ENCODE measurements at regions of chr5 and their contacts with region 1.

Region 1: GRCh38 chr5:40688127-40688761 is 8.5 kb downstream of the PTGER4 start:
- DNase-seq: peak; percentile 71 to 75
- ATAC-seq: peak; percentile 89 to 91
- H3K4me3 ChIP-seq: peak overlapping the region in 2 of 4 donors; percentile 18 to 78
- H3K27ac ChIP-seq: peak overlapping the region; percentile 32 to 87 (median 62)
- H3K4me1 ChIP-seq: peaks cover 14 to 24% of the 10 kb centered on the region in 2 donors
- H3K27me3 ChIP-seq: peaks cover 0 to 11% (median 7%) of the 10 kb centered on the region in 3 donors
- CTCF ChIP-seq: peak; percentile 82 to 90 (median 87)
- POLR2A ChIP-seq: no peak

Region 2: GRCh38 chr5:39578887-39579497 is 1109.3 kb before region 1 on chr5:
- in situ Hi-C with region 1: loop called (anchors 5 to 25 kb)
- intact Hi-C with region 1: loop called (anchors 1 kb)
- DNase-seq: no peak
- ATAC-seq: no peak
- H3K4me3 ChIP-seq: no peak overlapping the region
- H3K27ac ChIP-seq: no peak overlapping the region
- H3K4me1 ChIP-seq: no peaks in the 10 kb centered on the region
- H3K27me3 ChIP-seq: no peaks in the 10 kb centered on the region
- CTCF ChIP-seq: peak; percentile 39 to 69 (median 44)
- POLR2A ChIP-seq: no peak

Region 3: GRCh38 chr5:39714036-39714698 is 974.1 kb before region 1 on chr5:
- in situ Hi-C with region 1: loop called in 3 of 4 experiments (anchors 10 to 25 kb)
- intact Hi-C with region 1: loop called (anchors 1 kb)
- DNase-seq: peak in 1 of 2 donors; percentile 18
- ATAC-seq: peak; percentile 52 to 64
- H3K4me3 ChIP-seq: no peak overlapping the region
- H3K27ac ChIP-seq: peak overlapping the region; percentile 27 to 52 (median 48)
- H3K4me1 ChIP-seq: peaks cover 21 to 28% of the 10 kb centered on the region in 2 donors
- H3K27me3 ChIP-seq: no peaks in the 10 kb centered on the region
- CTCF ChIP-seq: peak in 4 of 5 experiments; percentile 44 to 65 (median 60)
- POLR2A ChIP-seq: no peak

Region 4: DNA sequence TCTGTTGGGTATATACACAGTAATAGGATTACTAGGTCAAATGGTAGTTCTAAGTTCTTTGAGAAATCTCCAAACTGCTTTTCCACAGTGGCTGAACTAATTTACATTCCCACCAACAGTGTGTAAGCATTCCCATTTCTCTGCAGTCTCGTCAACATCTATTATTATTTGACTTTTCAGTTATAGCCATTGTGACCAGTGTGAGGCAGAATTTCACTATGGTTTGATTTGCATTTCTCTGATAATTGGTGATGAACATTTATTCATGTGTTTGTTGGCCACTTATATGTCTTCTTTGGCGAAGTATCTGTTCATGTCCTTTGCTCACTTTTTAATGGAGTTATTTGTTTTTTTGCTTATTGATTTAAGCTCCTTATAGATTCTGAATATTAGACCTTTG is 667.2 kb before region 1 on chr5:
- in situ Hi-C with region 1: no loop called
- intact Hi-C with region 1: loop called (anchors 5 kb)
- DNase-seq: no peak
- ATAC-seq: no peak
- H3K4me3 ChIP-seq: no peak overlapping the region
- H3K27ac ChIP-seq: no peak overlapping the region
- H3K4me1 ChIP-seq: no peaks in the 10 kb centered on the region
- H3K27me3 ChIP-seq: no peaks in the 10 kb centered on the region
- CTCF ChIP-seq: no peak
- POLR2A ChIP-seq: no peak

Region 5: GRCh38 chr5:40736103-40736875 is 48.0 kb after region 1 on chr5:
- in situ Hi-C with region 1: no loop called
- intact Hi-C with region 1: loop called (anchors 2 kb)
- DNase-seq: no peak
- ATAC-seq: peak; percentile 56 to 68
- H3K4me3 ChIP-seq: no peak overlapping the region
- H3K27ac ChIP-seq: no peak overlapping the region
- H3K4me1 ChIP-seq: peaks cover 14 to 22% of the 10 kb centered on the region in 2 donors
- H3K27me3 ChIP-seq: no peaks in the 10 kb centered on the region
- CTCF ChIP-seq: peak; percentile 30 to 81 (median 69)
- POLR2A ChIP-seq: no peak

Region 6: DNA sequence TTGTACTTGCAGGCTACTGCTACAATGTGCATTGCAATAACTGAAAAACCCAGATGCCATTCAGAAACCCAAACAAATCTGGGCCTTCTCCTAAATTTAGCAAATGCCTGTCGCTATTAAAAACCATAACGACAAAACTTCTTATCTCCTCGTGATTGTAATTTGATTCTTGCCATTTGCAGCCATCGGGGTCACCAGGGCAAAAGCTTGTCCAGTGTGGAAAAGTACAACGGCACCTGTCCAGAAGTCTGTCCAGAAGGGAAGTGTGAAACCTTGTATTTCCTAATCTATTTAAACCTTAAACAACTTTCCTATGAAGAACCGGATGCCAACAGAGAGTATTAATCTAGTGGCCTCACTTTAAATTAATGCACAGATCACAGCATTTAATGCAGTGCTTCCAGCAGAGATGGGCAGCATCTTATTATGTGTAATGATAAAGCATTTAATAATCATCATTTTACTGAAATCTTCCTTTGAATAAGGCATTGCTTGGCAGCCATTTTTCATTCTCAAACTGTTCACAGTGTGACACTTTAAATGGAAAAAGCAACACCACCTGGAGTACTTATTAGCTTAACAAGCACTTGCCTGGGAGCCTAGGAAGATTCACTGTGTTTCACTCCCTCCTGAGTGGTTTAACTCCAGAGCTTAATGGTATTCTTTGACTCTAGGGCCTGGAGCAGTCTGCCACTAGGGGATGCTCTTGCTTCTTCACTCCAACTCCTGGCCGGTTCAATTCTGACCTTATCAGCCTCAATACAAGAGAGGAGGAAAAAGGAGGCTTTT is 216.2 kb after region 1 on chr5:
- in situ Hi-C with region 1: no loop called
- intact Hi-C with region 1: no loop called
- DNase-seq: peak; percentile 19 to 33
- ATAC-seq: peak; percentile 75 to 90
- H3K4me3 ChIP-seq: no peak overlapping the region
- H3K27ac ChIP-seq: peak overlapping the region in 3 of 4 donors; percentile 15 to 64 (median 53)
- H3K4me1 ChIP-seq: peaks cover 9 to 13% of the 10 kb centered on the region in 2 donors
- H3K27me3 ChIP-seq: no peaks in the 10 kb centered on the region
- CTCF ChIP-seq: peak; percentile 62 to 78 (median 76)
- POLR2A ChIP-seq: no peak